ENCODE measurements at regions of chr9 and their contacts with region 1.

Region 1: GRCh38 chr9:34522971-34523797 is at the start of gene ENHO:
- DNase-seq: peak; percentile 92
- H3K4me3 ChIP-seq: peak within 1 kb of the TSS; percentile 48
- H3K27ac ChIP-seq: no peak within 1 kb of the TSS
- H3K4me1 ChIP-seq: peaks cover 10% of the 10 kb centered on the region
- H3K27me3 ChIP-seq: no peaks in the 10 kb centered on the region
- CTCF ChIP-seq: no peak
- total RNA-seq, gene ENHO: 1.2 and 2.8 TPM in 2 replicates

Region 2: DNA sequence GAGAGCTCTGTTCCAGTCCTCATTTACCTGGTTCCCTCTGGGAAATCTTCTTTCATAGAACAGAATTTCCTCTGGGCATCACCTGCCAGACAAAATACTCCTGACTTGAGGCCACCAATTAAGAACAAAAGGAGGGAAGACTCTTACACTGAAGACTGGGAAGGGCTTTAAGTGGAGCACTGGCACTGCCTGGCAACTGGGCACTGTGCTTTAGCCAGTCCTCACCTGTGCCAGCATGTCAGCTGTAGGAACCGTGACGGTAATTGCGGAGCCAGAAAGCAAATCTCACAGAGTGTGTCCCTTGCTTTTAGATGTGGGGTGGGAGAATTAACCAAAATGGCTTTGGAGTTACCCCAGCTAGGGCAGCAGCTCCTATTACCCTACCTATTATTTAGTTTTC is 105.5 kb before region 1 on chr9:
- CTCF ChIA-PET with region 1: no interaction called
- POLR2A ChIA-PET with region 1: no interaction called
- intact Hi-C with region 1: no loop called
- DNase-seq: no peak
- H3K4me3 ChIP-seq: no peak overlapping the region
- H3K27ac ChIP-seq: no peak overlapping the region
- H3K4me1 ChIP-seq: no peaks in the 10 kb centered on the region
- H3K27me3 ChIP-seq: no peaks in the 10 kb centered on the region
- CTCF ChIP-seq: no peak

Region 3: GRCh38 chr9:34594177-34594576 is 71.0 kb after region 1 on chr9:
- CTCF ChIA-PET with region 1: no interaction called
- POLR2A ChIA-PET with region 1: no interaction called
- intact Hi-C with region 1: no loop called
- DNase-seq: no peak
- H3K4me3 ChIP-seq: no peak overlapping the region
- H3K27ac ChIP-seq: no peak overlapping the region
- H3K4me1 ChIP-seq: peaks cover 9% of the 10 kb centered on the region
- H3K27me3 ChIP-seq: peaks cover 12% of the 10 kb centered on the region
- CTCF ChIP-seq: no peak

Region 4: DNA sequence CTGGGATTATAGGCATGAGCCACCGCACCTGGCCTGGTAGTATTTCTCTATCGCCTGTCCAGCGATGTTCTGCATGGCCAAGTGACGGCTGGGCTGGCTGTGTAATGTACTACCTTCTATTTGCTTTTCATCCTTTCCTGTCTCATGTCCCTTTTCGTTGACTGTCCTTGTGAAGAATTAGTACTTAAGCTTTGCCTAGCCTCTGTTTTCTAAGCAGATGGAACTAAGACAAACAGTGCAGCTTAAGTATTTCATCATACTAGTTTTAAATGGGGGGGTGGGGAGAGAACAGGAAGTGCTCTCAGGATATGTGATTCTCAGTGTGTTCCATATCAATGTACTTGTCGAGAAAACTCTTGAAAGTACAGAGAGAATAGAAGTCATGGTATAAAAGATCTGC is 218.4 kb after region 1 on chr9:
- CTCF ChIA-PET with region 1: no interaction called
- POLR2A ChIA-PET with region 1: interaction called, 20 read pairs
- intact Hi-C with region 1: no loop called
- DNase-seq: peak; percentile 28
- H3K4me3 ChIP-seq: no peak overlapping the region
- H3K27ac ChIP-seq: no peak overlapping the region
- H3K4me1 ChIP-seq: no peaks in the 10 kb centered on the region
- H3K27me3 ChIP-seq: peaks cover 3% of the 10 kb centered on the region
- CTCF ChIP-seq: no peak

Measured in A673 (cell line).